ENCODE measurements at regions of chr3 and their contacts with region 1.

Region 1: DNA sequence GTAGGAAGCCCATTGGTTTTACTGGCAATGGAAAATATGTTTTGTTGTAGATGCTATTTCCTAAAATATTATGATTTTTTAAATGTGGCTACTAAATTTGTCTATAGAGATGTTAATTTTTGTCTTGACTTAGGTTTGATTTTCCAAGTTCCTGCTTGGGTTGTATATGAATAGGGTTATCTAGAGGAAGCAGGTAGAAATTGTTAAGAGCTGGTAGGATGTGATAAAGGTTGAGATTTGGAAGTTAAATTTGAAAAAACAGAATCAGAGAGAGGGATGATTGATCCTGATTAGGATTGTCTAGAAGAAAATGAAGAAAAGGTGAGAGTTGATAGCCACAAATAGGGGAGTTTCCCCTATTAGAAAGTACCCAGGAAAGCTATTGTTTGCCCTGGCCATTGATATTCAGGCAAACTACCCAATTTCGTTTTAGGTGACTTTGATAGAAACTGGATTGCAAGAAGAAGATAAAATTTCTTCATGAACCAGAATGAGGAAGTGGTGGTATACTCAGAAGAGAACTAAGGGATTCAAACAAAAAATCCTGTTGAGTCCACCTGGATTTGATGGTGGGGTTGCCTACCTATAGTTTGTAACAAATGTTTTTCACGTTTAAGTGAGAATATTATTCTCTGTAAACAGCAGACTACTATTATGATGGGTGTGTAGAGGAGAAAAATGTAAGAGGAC is 91.2 kb upstream of the PHLDB2 start:
- DNase-seq: no peak
- ATAC-seq: no peak
- H3K4me3 ChIP-seq: no peak overlapping the region
- H3K27ac ChIP-seq: no peak overlapping the region
- H3K4me1 ChIP-seq: peaks cover 20% of the 10 kb centered on the region
- H3K27me3 ChIP-seq: peaks cover 3% of the 10 kb centered on the region; the same call in 1 of the 2 replicates
- CTCF ChIP-seq: no peak
- POLR2A ChIP-seq: no peak
- RAD21 ChIP-seq: no peak

Region 2: GRCh38 chr3:111803123-111803593 is 35.3 kb after region 1 on chr3:
- CTCF ChIA-PET with region 1: no interaction called
- POLR2A ChIA-PET with region 1: no interaction called
- dilution Hi-C with region 1: no loop called
- in situ Hi-C with region 1: no loop called
- intact Hi-C with region 1: no loop called
- DNase-seq: peak; percentile 97
- ATAC-seq: peak; percentile 95
- H3K4me3 ChIP-seq: no peak overlapping the region
- H3K27ac ChIP-seq: peak overlapping the region; percentile 59
- H3K4me1 ChIP-seq: peaks cover 4% of the 10 kb centered on the region
- H3K27me3 ChIP-seq: no peaks in the 10 kb centered on the region
- CTCF ChIP-seq: no peak
- POLR2A ChIP-seq: no peak
- RAD21 ChIP-seq: no peak; the same call in 1 of the 2 replicates

Region 3: DNA sequence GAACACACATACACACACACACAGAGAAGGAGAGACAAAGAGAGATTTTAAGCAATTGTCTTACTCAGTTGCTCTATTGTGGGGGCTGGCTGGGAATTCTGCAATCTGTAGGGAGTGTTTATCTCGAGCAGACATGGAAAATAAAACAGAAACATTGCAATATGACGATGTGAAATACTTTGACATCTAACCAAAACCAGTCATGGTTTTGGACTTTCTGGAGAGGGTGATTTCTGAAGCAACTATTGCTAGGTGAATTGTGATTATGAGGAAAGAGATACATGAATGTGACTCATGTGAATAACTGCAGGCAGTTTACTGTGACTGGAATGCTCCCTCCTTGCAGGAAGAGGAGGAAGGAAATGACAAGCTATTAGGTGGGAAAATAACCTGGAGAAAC is 78.8 kb after region 1 on chr3:
- CTCF ChIA-PET with region 1: no interaction called
- POLR2A ChIA-PET with region 1: no interaction called
- dilution Hi-C with region 1: no loop called
- in situ Hi-C with region 1: no loop called
- intact Hi-C with region 1: loop called (anchors 2 kb)
- DNase-seq: peak; percentile 91
- ATAC-seq: peak; percentile 65
- H3K4me3 ChIP-seq: no peak overlapping the region
- H3K27ac ChIP-seq: no peak overlapping the region
- H3K4me1 ChIP-seq: peaks cover 8% of the 10 kb centered on the region; the same call in 1 of the 2 replicates
- H3K27me3 ChIP-seq: no peaks in the 10 kb centered on the region
- CTCF ChIP-seq: no peak
- POLR2A ChIP-seq: no peak
- RAD21 ChIP-seq: no peak

Measured in IMR-90 (cell line).